OCI-LY7 (cell line): ENCODE measurements at regions of chr5 and their contacts with region 1.

Region 1: GRCh38 chr5:94640176-94640575 is 21.7 kb downstream of the SLF1 start:
- DNase-seq: no peak
- H3K4me3 ChIP-seq: no peak overlapping the region
- H3K27ac ChIP-seq: no peak overlapping the region
- H3K4me1 ChIP-seq: no peaks in the 10 kb centered on the region
- CTCF ChIP-seq: no peak

Region 2: DNA sequence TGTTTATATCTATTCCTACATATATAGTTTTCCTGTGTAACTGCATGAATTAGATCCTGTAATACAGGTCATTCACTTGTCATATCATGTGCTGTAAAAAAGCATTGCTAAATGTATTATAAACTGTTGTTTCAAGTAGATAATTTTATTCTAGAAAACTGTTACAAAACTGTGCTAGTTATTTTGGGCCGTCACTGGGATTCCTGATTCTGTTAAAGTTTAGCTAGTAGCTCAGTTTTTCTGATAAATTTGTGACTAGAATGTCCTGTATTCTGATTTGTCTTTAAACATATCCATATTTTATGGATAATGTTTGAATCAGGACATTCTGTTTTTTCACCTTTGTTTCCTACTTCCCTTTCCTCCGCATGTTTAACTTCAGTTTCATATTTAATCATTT is 16.3 kb before region 1 on chr5:
- CTCF ChIA-PET with region 1: no interaction called
- POLR2A ChIA-PET with region 1: interaction called, 5 read pairs
- intact Hi-C with region 1: loop called (anchors 2 kb)
- DNase-seq: no peak
- H3K4me3 ChIP-seq: no peak overlapping the region
- H3K27ac ChIP-seq: no peak overlapping the region
- H3K4me1 ChIP-seq: peaks cover 48% of the 10 kb centered on the region
- CTCF ChIP-seq: no peak